ENCODE measurements at regions of chrX and their contacts with region 1.

Region 1: GRCh38 chrX:31435592-31435991 is 363.8 kb upstream of the FTHL17 start:
- DNase-seq: no peak
- H3K4me3 ChIP-seq: no peak overlapping the region
- H3K27ac ChIP-seq: no peak overlapping the region
- H3K4me1 ChIP-seq: no peaks in the 10 kb centered on the region
- H3K27me3 ChIP-seq: no peaks in the 10 kb centered on the region
- CTCF ChIP-seq: no peak
- EP300 ChIP-seq: no peak
- POLR2A ChIP-seq: no peak

Region 2: GRCh38 chrX:31499109-31499508 is 63.5 kb after region 1 on chrX:
- intact Hi-C with region 1: loop called (anchors 5 kb)
- DNase-seq: no peak
- H3K4me3 ChIP-seq: no peak overlapping the region
- H3K27ac ChIP-seq: no peak overlapping the region
- H3K4me1 ChIP-seq: no peaks in the 10 kb centered on the region
- H3K27me3 ChIP-seq: no peaks in the 10 kb centered on the region
- CTCF ChIP-seq: no peak
- EP300 ChIP-seq: no peak
- POLR2A ChIP-seq: no peak

Region 3: GRCh38 chrX:31629195-31629594 is 193.6 kb after region 1 on chrX:
- intact Hi-C with region 1: no loop called
- DNase-seq: no peak
- H3K4me3 ChIP-seq: no peak overlapping the region
- H3K27ac ChIP-seq: no peak overlapping the region
- H3K4me1 ChIP-seq: no peaks in the 10 kb centered on the region
- H3K27me3 ChIP-seq: no peaks in the 10 kb centered on the region
- CTCF ChIP-seq: no peak
- EP300 ChIP-seq: no peak
- POLR2A ChIP-seq: no peak

Region 4: DNA sequence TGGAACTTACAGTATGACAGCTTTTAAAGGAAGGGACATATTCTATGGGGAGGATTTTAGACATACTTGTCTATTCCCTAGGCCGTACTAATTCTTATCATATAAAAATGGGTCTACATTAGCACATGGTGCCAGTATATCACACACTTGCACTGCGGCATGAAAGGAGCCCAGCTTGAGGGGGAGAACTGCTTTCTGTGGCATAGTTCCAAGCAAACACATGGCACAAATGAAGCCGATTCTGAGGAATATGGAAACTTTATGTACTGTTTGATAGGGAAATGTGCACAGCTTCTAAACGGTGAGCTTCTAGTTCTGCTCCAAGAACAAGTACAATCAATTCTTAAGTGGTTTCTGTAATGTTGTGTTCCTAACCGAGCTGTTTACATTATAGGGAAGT is 311.8 kb after region 1 on chrX:
- intact Hi-C with region 1: no loop called
- DNase-seq: no peak
- H3K4me3 ChIP-seq: no peak overlapping the region
- H3K27ac ChIP-seq: no peak overlapping the region
- H3K4me1 ChIP-seq: peaks cover 0 to 4% (median 0%) of the 10 kb centered on the region in 4 donors
- H3K27me3 ChIP-seq: no peaks in the 10 kb centered on the region
- CTCF ChIP-seq: no peak
- EP300 ChIP-seq: no peak
- POLR2A ChIP-seq: no peak

Measured in sigmoid colon (tissue), 7 donors.